ENCODE measurements at regions of chr16 and their contacts with region 1.

Region 1: DNA sequence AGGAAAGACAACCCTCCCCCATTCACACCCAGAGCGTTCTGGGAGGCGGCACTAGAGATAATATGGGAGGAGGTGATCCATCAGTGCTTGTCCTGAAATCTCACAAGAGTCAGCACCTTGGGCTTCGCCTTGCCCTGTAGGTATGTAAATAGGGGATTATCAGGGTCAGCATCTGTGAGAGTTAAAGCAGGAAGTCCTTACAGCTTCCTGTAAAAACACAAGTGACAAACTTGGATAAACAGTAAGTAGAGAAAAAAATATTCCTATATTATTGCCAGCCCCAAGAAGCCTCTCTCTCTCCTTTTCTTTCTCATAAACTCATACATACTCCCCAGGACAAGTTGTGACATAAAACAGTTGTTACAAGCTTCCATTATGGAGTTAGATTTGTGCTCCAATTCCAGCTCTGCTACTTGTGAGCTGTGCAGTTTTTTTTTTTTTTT is 187.7 kb downstream of the MAF start:
- DNase-seq: no peak
- H3K4me3 Mint-ChIP-seq: no peak overlapping the region
- H3K27ac Mint-ChIP-seq: peak overlapping the region; percentile 3
- H3K4me1 Mint-ChIP-seq: peaks cover 41% of the 10 kb centered on the region
- H3K27me3 Mint-ChIP-seq: no peaks in the 10 kb centered on the region

Region 2: GRCh38 chr16:79066561-79066960 is 346.2 kb before region 1 on chr16:
- CTCF ChIA-PET with region 1: no interaction called
- POLR2A ChIA-PET with region 1: no interaction called
- intact Hi-C with region 1: no loop called
- DNase-seq: no peak
- H3K4me3 Mint-ChIP-seq: no peak overlapping the region
- H3K27ac Mint-ChIP-seq: no peak overlapping the region
- H3K4me1 Mint-ChIP-seq: peaks cover 55% of the 10 kb centered on the region
- H3K27me3 Mint-ChIP-seq: peaks cover 8% of the 10 kb centered on the region

Region 3: GRCh38 chr16:79114759-79115158 is 298.0 kb before region 1 on chr16:
- CTCF ChIA-PET with region 1: no interaction called
- POLR2A ChIA-PET with region 1: no interaction called
- intact Hi-C with region 1: no loop called
- DNase-seq: no peak
- H3K4me3 Mint-ChIP-seq: no peak overlapping the region
- H3K27ac Mint-ChIP-seq: no peak overlapping the region
- H3K4me1 Mint-ChIP-seq: no peaks in the 10 kb centered on the region
- H3K27me3 Mint-ChIP-seq: no peaks in the 10 kb centered on the region

Region 4: DNA sequence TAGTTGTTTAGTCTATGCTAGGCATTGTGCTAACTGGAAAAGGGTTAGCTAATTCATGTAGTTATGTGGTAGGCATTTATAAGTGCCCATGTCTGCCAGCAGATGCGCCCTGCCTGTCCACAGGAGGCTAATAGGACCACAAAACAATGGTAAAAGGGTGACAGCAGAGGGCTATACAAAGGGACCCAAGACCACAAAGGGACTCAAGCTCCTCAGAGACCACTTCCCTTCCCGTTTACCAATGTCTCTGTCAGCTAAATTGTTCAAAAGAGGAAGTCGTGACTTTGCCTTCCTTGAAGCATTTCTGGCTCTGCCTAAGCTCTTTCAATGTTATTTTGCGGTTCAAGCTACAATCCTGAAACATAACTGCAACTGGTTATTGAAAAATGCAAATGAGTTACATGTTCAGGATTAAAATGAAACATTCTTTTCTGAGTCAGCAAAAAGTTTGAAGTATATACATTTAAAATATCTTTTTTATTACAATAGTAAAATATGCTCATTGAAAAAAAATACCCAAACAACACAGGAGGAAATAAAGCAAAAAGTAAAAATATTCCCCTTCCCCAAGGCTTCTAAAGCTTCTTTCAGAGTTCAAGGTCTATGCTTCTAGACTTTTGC is 38.5 kb after region 1 on chr16:
- CTCF ChIA-PET with region 1: interaction called, 3 read pairs
- POLR2A ChIA-PET with region 1: no interaction called
- intact Hi-C with region 1: loop called (anchors 1 kb)
- DNase-seq: peak; percentile 21
- H3K4me3 Mint-ChIP-seq: no peak overlapping the region
- H3K27ac Mint-ChIP-seq: peak overlapping the region; percentile 64
- H3K4me1 Mint-ChIP-seq: peaks cover 20% of the 10 kb centered on the region
- H3K27me3 Mint-ChIP-seq: no peaks in the 10 kb centered on the region

Region 5: DNA sequence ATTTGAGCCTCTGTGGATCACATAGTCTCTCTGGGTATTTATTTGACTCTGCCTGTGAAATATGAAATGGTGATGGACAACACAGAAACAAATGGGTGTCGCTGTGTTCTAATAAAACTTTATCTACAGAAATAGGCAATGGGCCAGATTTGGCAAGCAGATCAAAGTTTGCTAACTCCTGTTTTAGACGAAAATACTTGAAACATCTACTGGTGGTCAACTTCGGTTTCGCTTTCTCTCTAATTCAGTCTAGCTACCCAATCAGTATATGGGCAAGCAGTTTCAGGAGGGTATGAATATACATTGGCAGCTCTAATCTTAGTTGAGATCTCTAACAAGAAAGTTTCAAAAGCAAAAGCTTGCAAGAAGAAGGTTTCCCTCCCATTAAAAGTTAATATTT is 1067.9 kb after region 1 on chr16:
- CTCF ChIA-PET with region 1: no interaction called
- POLR2A ChIA-PET with region 1: no interaction called
- intact Hi-C with region 1: no loop called
- DNase-seq: no peak
- H3K4me3 Mint-ChIP-seq: no peak overlapping the region
- H3K27ac Mint-ChIP-seq: no peak overlapping the region
- H3K4me1 Mint-ChIP-seq: no peaks in the 10 kb centered on the region
- H3K27me3 Mint-ChIP-seq: peaks cover 14% of the 10 kb centered on the region

Measured in activated CD4-positive, alpha-beta memory T cell treated with anti-CD3 and anti-CD28 coated beads for 36 hours (primary cell).